RWPE1 (cell line): ENCODE measurements at regions of chr11 and their contacts with region 1.

Region 1: GRCh38 chr11:10792398-10792975 is 16.2 kb downstream of the EIF4G2 start:
- DNase-seq: peak; percentile 83
- H3K27ac ChIP-seq: no peak overlapping the region
- CTCF ChIP-seq: peak; percentile 93

Region 2: GRCh38 chr11:10693509-10694081 is 98.9 kb before region 1 on chr11 and contains the start of gene IRAG1:
- CTCF ChIA-PET with region 1: no interaction called
- POLR2A ChIA-PET with region 1: no interaction called
- DNase-seq: no peak
- H3K27ac ChIP-seq: no peak within 1 kb of the TSS
- CTCF ChIP-seq: no peak

Region 3: GRCh38 chr11:10758957-10759356 is 33.5 kb before region 1 on chr11:
- CTCF ChIA-PET with region 1: no interaction called
- POLR2A ChIA-PET with region 1: no interaction called
- DNase-seq: no peak
- H3K27ac ChIP-seq: no peak overlapping the region
- CTCF ChIP-seq: peak; percentile 13; the same call in 1 of the 2 replicates

Region 4: GRCh38 chr11:10808553-10809372 is 16.3 kb after region 1 on chr11 and contains the start of gene EIF4G2:
- CTCF ChIA-PET with region 1: interaction called, 4 read pairs
- POLR2A ChIA-PET with region 1: interaction called, 11 read pairs
- DNase-seq: peak; percentile 99
- H3K27ac ChIP-seq: peak within 1 kb of the TSS; percentile 96
- CTCF ChIP-seq: no peak

Region 5: DNA sequence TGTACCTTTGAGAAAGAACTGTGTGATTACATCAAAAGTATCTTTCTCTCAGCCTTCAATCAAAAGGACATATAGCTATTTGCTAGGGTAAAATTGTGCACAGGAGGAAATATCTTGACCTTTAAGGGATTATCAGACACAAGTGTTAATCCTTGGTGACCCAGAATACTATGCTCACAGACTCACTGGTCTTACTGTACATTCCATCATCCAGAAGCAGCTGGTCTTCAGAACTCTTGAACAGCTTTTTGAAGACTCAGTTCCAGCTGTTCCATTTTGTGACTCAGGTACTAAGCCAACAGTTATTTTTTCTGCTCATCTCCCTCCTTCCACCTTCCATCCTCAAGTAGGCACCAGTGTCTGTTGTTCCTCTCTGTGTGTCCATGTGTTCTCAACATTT is 45.6 kb after region 1 on chr11:
- CTCF ChIA-PET with region 1: no interaction called
- POLR2A ChIA-PET with region 1: no interaction called
- DNase-seq: no peak
- H3K27ac ChIP-seq: no peak overlapping the region
- CTCF ChIP-seq: no peak

Region 6: GRCh38 chr11:10899121-10899830 is 106.8 kb after region 1 on chr11:
- CTCF ChIA-PET with region 1: interaction called, 12 read pairs
- POLR2A ChIA-PET with region 1: no interaction called
- DNase-seq: peak; percentile 94
- H3K27ac ChIP-seq: peak overlapping the region; percentile 100
- CTCF ChIP-seq: no peak

Region 7: GRCh38 chr11:11003226-11003625 is 210.7 kb after region 1 on chr11:
- CTCF ChIA-PET with region 1: interaction called, 12 read pairs
- POLR2A ChIA-PET with region 1: no interaction called
- DNase-seq: no peak
- H3K27ac ChIP-seq: no peak overlapping the region
- CTCF ChIP-seq: no peak

Region 8: DNA sequence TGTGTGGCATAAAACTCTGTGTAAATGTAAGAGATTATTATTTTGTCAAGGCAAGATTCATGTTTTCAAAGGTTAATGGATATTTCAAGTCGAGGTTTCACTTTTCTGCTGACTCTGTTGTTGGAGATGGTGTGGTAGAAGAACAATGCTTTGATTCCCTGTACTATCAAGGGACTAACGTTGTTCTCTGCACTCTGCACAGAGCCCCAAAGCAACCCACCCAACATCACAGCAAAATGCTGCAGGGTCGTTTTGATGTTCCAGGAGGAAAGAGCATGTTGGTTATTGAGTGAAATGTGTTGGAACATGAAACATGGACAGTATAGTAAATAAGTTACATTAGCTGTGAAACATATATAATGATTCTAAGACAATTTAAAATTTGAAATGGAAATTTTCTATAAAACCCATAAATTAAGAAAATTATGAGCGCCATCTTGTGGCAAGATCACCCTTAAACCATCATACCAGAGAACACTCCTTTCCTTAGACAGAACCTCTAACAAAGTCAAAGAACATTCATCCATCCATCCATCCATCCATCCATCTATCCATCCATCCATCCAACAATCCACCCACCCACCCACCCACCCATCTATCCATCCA is 229.7 kb after region 1 on chr11:
- CTCF ChIA-PET with region 1: interaction called, 14 read pairs
- POLR2A ChIA-PET with region 1: interaction called, 4 read pairs
- DNase-seq: peak; percentile 44
- H3K27ac ChIP-seq: no peak overlapping the region
- CTCF ChIP-seq: peak; percentile 42